CD8-positive, alpha-beta T cell (primary cell): ENCODE measurements at regions of chr15 and their contacts with region 1.

Region 1: DNA sequence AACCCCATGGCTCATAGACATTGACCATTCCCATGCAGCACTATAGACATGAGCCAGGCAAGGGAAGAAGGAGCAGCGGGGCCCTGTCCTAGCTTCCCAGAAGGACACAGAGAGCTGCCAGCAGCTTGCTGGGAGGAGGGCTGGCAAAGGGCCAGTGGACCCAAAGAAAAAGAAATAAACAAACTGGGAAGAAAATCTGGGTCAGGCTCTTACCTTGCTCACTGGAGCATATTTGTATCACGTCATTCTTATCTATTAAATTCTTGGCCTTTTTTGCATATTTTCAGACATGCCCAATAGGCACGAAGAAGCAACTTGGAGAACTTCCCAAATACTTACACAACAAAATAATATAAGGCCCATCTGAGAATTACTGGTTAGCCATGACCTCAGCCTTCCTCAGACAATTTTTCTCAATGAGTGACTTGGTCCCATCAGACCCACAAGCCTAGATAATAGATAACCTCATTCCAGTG is 28.4 kb downstream of the RASGRP1 start:
- DNase-seq: no peak
- ATAC-seq: no peak
- H3K4me3 ChIP-seq: no peak overlapping the region
- H3K4me3 Mint-ChIP-seq: no peak overlapping the region
- H3K27ac ChIP-seq: peak overlapping the region in 1 of 2 experiments; percentile 30
- H3K27ac Mint-ChIP-seq: peak overlapping the region; percentile 89
- H3K4me1 ChIP-seq: peaks cover 96% of the 10 kb centered on the region
- H3K4me1 Mint-ChIP-seq: peaks cover 98% of the 10 kb centered on the region
- H3K27me3 ChIP-seq: no peaks in the 10 kb centered on the region
- H3K27me3 Mint-ChIP-seq: no peaks in the 10 kb centered on the region
- CTCF ChIP-seq: no peak

Region 2: DNA sequence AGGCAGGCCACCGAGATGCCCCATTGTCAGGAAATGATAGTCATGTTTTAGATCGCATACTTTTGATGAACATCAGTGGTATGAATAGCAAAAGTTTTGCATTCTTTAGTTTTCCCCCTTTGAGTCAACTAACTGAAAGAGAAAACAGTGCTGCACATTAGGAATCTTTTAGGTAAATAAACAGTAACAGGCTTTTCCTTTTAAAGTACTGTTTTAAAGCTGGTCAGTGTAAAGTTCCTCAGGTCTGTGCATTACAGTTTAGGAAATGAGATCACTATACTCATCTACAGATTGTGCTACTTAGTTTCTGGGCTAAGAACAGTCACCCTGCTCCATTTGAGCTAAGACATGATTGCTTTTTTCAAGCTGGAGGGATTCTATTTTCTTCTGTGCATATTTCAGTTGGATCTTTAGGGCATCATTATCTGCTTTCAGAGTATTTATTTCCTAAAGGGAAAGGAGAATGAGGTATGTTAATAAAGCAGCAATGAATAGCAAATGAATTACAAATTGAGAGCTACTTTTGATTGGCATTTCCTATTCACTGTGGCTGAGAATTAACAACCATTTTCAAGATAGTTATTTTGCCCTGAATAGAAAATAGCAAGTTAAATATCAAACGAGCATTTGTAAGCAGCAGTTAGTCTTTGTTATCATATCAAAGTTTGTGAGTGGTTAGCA is 45.9 kb before region 1 on chr15:
- CTCF ChIA-PET with region 1: no interaction called
- POLR2A ChIA-PET with region 1: interaction called, 5 read pairs
- intact Hi-C with region 1: loop called in 1 of 2 experiments (anchors 5 kb)
- DNase-seq: no peak
- ATAC-seq: no peak
- H3K4me3 ChIP-seq: no peak overlapping the region
- H3K4me3 Mint-ChIP-seq: no peak overlapping the region
- H3K27ac ChIP-seq: peak overlapping the region in 1 of 2 experiments; percentile 17
- H3K27ac Mint-ChIP-seq: peak overlapping the region; percentile 66
- H3K4me1 ChIP-seq: peaks cover 14% of the 10 kb centered on the region
- H3K4me1 Mint-ChIP-seq: peaks cover 36% of the 10 kb centered on the region
- H3K27me3 ChIP-seq: no peaks in the 10 kb centered on the region
- H3K27me3 Mint-ChIP-seq: no peaks in the 10 kb centered on the region
- CTCF ChIP-seq: no peak

Region 3: GRCh38 chr15:38521316-38521715 is 14.9 kb before region 1 on chr15:
- CTCF ChIA-PET with region 1: interaction called, 4 read pairs
- POLR2A ChIA-PET with region 1: interaction called, 5 read pairs
- intact Hi-C with region 1: loop called in 1 of 2 experiments (anchors 2 kb)
- DNase-seq: no peak
- ATAC-seq: no peak
- H3K4me3 ChIP-seq: no peak overlapping the region
- H3K4me3 Mint-ChIP-seq: no peak overlapping the region
- H3K27ac ChIP-seq: no peak overlapping the region
- H3K27ac Mint-ChIP-seq: peak overlapping the region; percentile 83
- H3K4me1 ChIP-seq: peaks cover 5% of the 10 kb centered on the region
- H3K4me1 Mint-ChIP-seq: peaks cover 56% of the 10 kb centered on the region
- H3K27me3 ChIP-seq: no peaks in the 10 kb centered on the region
- H3K27me3 Mint-ChIP-seq: no peaks in the 10 kb centered on the region
- CTCF ChIP-seq: no peak

Region 4: DNA sequence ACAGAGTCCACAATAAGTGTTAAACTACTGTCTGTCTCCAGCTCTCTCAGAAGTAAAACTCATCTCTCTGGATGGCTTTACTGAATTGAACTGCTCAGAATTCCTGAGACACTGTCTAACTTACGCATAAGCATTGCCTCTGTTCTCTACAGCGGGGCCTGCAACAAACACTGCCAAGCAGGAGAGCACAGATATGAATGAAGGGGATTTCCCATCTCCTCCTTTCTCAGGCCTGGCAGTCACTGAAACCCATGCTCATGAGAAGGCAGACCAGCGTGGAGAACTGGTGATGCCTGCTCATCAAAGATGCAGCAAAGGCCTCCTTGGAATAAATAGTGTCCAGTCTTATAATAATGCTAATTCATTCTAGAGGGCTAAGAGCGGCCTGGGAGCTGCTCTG is 18.1 kb after region 1 on chr15:
- CTCF ChIA-PET with region 1: interaction called, 3 read pairs
- POLR2A ChIA-PET with region 1: interaction called, 5 read pairs
- intact Hi-C with region 1: loop called in 1 of 2 experiments (anchors 2 kb)
- DNase-seq: peak in 3 of 9 experiments; percentile 34 to 72 (median 57)
- ATAC-seq: peak; percentile 60
- H3K4me3 ChIP-seq: no peak overlapping the region
- H3K4me3 Mint-ChIP-seq: peak overlapping the region; percentile 52
- H3K27ac ChIP-seq: peak overlapping the region in 1 of 2 experiments; percentile 71
- H3K27ac Mint-ChIP-seq: peak overlapping the region; percentile 91
- H3K4me1 ChIP-seq: peaks cover 92% of the 10 kb centered on the region
- H3K4me1 Mint-ChIP-seq: peaks cover 90% of the 10 kb centered on the region
- H3K27me3 ChIP-seq: no peaks in the 10 kb centered on the region
- H3K27me3 Mint-ChIP-seq: no peaks in the 10 kb centered on the region
- CTCF ChIP-seq: no peak